ENCODE measurements at regions of chr15 and their contacts with region 1.

Region 1: DNA sequence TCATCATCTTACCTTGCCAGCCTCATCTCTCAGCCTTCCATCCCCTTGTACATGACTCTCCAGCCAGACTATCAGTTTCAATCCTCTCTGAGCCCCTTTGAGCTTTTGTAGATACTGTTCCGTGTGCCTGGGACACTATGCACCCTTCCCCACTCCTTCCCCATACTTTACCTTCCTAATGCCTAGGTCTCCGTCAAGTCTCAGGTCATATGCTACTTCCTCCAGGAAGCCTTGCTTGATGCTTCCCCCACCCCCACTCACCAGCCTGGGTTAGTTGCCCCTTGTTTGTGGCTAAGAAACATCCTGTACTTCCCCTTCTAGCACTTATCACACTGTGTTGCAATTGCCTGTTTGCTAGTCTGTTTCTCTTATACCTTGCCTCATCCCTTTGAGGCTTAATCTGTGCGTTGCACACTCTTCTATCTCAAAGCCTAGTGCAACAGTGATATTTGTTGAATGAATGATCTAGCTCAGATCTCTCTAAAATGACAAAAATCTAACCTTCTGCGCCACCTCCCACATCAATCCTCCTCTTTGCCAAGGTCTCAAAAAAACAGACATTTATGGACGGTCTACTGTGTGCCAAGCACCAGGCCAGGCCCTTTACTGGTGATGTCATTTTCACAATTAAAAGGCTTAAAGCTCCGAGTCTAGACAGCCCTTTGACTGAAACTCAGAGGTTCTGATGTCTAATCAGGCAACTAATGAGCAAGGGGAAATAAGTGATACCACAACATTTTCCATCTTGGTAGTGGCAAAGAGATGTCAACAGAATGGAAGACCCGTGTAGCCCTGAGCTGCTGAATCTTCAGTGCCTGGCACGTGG is 6.5 kb upstream of the USP3 start:
- DNase-seq: peak; percentile 48 to 95 (median 79)
- ATAC-seq: peak; percentile 69
- H3K4me3 ChIP-seq: peak overlapping the region; percentile 28 to 37
- H3K4me3 Mint-ChIP-seq: no peak overlapping the region
- H3K27ac ChIP-seq: peak overlapping the region; percentile 57 to 94
- H3K27ac Mint-ChIP-seq: no peak overlapping the region
- H3K4me1 ChIP-seq: peaks cover 91% of the 10 kb centered on the region
- H3K4me1 Mint-ChIP-seq: peaks cover 79% of the 10 kb centered on the region
- H3K27me3 ChIP-seq: no peaks in the 10 kb centered on the region
- H3K27me3 Mint-ChIP-seq: no peaks in the 10 kb centered on the region
- CTCF ChIP-seq: no peak

Region 2: DNA sequence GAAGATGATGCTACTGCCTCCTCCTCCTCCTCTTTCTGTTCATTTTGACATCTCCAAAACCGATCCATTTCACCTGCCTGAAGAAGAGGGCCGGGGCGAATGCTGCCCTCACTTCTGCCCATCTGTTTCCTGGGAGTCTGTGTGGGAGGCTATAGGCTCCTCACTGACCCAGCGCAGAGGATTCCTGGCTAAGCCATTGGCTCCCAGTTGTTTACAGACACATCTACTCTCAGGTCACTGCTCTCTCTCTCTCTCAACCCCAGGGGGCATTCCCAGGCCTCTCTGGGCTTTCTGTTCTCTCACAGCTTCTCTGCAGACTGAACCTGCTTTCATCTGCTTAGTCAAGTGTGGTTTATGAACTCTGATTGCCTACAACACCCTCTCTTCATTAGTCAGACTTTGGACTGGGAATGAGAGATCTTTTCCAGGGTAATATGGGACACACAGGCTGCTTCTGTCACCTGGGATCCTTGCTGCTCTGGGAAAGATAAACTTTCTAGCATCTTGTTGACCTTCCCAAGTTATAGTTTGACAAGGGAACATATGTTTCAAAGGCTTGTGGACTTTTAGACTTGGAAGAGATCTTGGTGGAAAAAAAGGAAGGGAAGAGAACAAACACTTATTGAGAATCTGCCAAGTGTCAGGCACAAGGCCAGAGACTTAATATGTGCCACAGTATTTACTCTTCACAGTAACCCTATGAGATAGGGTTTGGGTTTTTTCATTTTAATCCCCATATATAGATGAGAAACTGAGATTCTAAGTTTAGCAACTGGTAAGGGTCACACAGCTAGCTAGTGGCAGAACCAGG is 23.7 kb before region 1 on chr15:
- CTCF ChIA-PET with region 1: interaction called, 69 read pairs
- POLR2A ChIA-PET with region 1: interaction called, 121 read pairs
- intact Hi-C with region 1: loop called (anchors 1 kb)
- DNase-seq: peak in 7 of 9 experiments; percentile 22 to 83 (median 60)
- ATAC-seq: peak; percentile 74
- H3K4me3 ChIP-seq: no peak overlapping the region
- H3K4me3 Mint-ChIP-seq: no peak overlapping the region
- H3K27ac ChIP-seq: no peak overlapping the region
- H3K27ac Mint-ChIP-seq: peak overlapping the region; percentile 94
- H3K4me1 ChIP-seq: peaks cover 43% of the 10 kb centered on the region
- H3K4me1 Mint-ChIP-seq: peaks cover 50% of the 10 kb centered on the region
- H3K27me3 ChIP-seq: no peaks in the 10 kb centered on the region
- H3K27me3 Mint-ChIP-seq: no peaks in the 10 kb centered on the region
- CTCF ChIP-seq: no peak

Region 3: DNA sequence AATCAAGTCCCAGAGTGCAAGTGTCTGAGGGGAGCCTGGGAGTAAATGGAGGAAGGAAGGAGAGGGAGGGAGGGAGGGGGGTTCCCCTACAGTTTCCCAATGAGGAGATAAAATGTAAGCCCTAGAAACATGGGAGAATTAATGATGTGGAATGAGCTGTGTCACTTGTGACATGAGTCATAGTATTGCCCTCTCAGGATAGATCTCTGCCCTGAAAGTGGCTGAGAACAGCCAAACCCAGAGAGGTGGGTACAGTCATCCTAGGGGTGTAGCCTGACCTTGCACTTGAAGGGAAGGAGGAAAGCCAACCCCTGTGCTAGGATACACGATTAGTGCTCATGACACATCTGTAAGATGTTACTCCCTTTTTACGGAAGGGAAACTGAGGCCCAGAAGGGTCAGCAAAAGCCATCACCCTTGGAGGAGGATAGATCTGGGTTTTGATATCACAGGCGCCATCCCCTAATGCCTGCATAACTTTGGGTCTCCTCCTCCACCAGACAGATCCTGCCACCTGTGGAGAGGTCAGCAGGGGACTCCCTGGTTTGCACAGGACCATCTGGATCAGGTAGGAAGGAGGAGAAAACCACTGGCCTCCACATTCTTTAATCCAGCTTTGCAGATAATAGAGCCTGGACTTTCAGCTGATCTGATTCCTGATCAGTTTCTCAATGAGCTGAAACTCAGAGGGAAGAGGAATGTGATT is 16.6 kb before region 1 on chr15:
- CTCF ChIA-PET with region 1: interaction called, 69 read pairs
- POLR2A ChIA-PET with region 1: interaction called, 121 read pairs
- intact Hi-C with region 1: loop called (anchors 1 kb)
- DNase-seq: peak in 1 of 9 experiments; percentile 46
- ATAC-seq: no peak
- H3K4me3 ChIP-seq: no peak overlapping the region
- H3K4me3 Mint-ChIP-seq: peak overlapping the region; percentile 15
- H3K27ac ChIP-seq: peak overlapping the region in 1 of 2 experiments; percentile 78
- H3K27ac Mint-ChIP-seq: peak overlapping the region; percentile 99
- H3K4me1 ChIP-seq: peaks cover 73% of the 10 kb centered on the region
- H3K4me1 Mint-ChIP-seq: peaks cover 76% of the 10 kb centered on the region
- H3K27me3 ChIP-seq: no peaks in the 10 kb centered on the region
- H3K27me3 Mint-ChIP-seq: no peaks in the 10 kb centered on the region
- CTCF ChIP-seq: no peak

Region 4: DNA sequence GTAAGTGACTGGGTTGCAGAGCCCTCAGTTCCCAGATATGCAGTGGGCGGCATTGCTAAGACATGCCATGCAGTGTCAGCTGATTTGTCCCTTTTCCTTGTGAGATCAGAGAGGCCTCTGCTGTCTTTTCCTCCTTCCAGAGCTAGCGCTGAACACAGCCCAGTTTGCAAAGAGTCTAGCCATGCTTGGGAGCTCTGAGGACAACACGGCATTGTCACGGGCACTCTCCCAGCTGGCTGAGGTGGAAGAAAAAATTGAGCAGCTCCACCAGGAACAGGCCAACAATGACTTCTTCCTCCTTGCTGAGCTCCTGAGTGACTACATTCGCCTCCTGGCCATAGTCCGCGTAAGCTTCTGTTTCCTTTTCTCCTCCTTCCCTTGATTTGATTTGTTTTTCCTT is 633.7 kb after region 1 on chr15:
- CTCF ChIA-PET with region 1: no interaction called
- POLR2A ChIA-PET with region 1: no interaction called
- intact Hi-C with region 1: no loop called
- DNase-seq: no peak
- ATAC-seq: no peak
- H3K4me3 ChIP-seq: no peak overlapping the region
- H3K4me3 Mint-ChIP-seq: no peak overlapping the region
- H3K27ac ChIP-seq: no peak overlapping the region
- H3K27ac Mint-ChIP-seq: no peak overlapping the region
- H3K4me1 ChIP-seq: no peaks in the 10 kb centered on the region
- H3K4me1 Mint-ChIP-seq: no peaks in the 10 kb centered on the region
- H3K27me3 ChIP-seq: no peaks in the 10 kb centered on the region
- H3K27me3 Mint-ChIP-seq: no peaks in the 10 kb centered on the region
- CTCF ChIP-seq: no peak